ENCODE measurements at regions of chr9 and their contacts with region 1.

Region 1: GRCh38 chr9:85359161-85359560 is 382.6 kb downstream of the AGTPBP1 start:
- DNase-seq: no peak
- ATAC-seq: no peak
- H3K4me3 ChIP-seq: no peak overlapping the region
- H3K27ac ChIP-seq: no peak overlapping the region
- H3K4me1 ChIP-seq: no peaks in the 10 kb centered on the region
- H3K27me3 ChIP-seq: no peaks in the 10 kb centered on the region
- CTCF ChIP-seq: no peak
- POLR2A ChIP-seq: no peak

Region 2: DNA sequence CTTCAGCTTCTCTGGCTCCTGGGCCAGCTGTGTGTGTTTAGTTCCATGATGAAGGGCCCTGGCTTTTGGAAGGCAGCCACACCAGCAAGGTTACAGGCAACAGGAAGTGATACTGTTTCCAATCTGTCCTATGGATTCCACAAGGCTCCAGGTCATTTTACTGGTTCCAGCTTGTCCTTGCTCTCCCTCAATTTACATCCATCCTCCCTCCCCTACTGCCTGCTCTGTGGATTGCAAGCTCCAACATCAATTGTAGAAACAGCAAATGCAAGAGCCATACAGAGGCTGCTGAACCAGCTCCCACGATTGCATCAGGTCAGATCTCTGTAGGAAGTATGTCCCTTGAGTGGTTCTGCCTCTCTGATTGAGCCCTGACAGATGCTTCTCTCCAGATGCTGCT is 279.8 kb before region 1 on chr9:
- intact Hi-C with region 1: no loop called
- DNase-seq: no peak
- ATAC-seq: no peak
- H3K4me3 ChIP-seq: no peak overlapping the region
- H3K27ac ChIP-seq: no peak overlapping the region
- H3K4me1 ChIP-seq: no peaks in the 10 kb centered on the region
- H3K27me3 ChIP-seq: peaks cover 0 to 5% (median 0%) of the 10 kb centered on the region in 9 donors
- CTCF ChIP-seq: no peak
- POLR2A ChIP-seq: no peak

Region 3: GRCh38 chr9:85283421-85283820 is 75.7 kb before region 1 on chr9:
- intact Hi-C with region 1: loop called in 1 of 10 experiments (anchors 5 kb)
- DNase-seq: no peak
- ATAC-seq: no peak
- H3K4me3 ChIP-seq: no peak overlapping the region
- H3K27ac ChIP-seq: no peak overlapping the region
- H3K4me1 ChIP-seq: no peaks in the 10 kb centered on the region
- H3K27me3 ChIP-seq: peaks cover 0 to 6% (median 0%) of the 10 kb centered on the region in 9 donors
- CTCF ChIP-seq: no peak
- POLR2A ChIP-seq: no peak

Region 4: GRCh38 chr9:85310573-85310972 is 48.6 kb before region 1 on chr9:
- intact Hi-C with region 1: no loop called
- DNase-seq: no peak
- ATAC-seq: no peak
- H3K4me3 ChIP-seq: no peak overlapping the region
- H3K27ac ChIP-seq: no peak overlapping the region
- H3K4me1 ChIP-seq: no peaks in the 10 kb centered on the region
- H3K27me3 ChIP-seq: no peaks in the 10 kb centered on the region
- CTCF ChIP-seq: no peak
- POLR2A ChIP-seq: no peak

Region 5: DNA sequence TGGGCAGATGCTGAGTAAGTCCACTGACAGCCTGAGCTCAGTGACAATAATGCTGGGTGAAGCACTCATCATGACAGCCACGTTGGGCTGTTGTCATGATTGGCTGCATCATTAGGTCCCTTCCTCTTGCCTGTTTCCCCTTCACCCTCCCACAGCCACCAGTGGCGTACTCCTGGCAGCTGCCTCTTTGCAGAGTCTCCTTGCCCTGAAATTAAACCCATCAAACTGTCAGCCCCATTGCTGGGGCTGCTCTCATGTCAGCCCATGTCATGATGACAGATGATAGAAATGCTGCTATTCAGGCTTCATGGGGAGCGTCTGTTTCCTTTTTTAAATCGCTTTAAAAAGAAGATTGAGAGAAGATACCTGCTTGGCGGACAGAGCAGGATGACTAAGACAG is 55.2 kb after region 1 on chr9:
- intact Hi-C with region 1: loop called in 1 of 10 experiments (anchors 10 kb)
- DNase-seq: no peak
- ATAC-seq: no peak
- H3K4me3 ChIP-seq: no peak overlapping the region
- H3K27ac ChIP-seq: no peak overlapping the region
- H3K4me1 ChIP-seq: no peaks in the 10 kb centered on the region
- H3K27me3 ChIP-seq: peaks cover 0 to 6% (median 0%) of the 10 kb centered on the region in 9 donors
- CTCF ChIP-seq: no peak
- POLR2A ChIP-seq: no peak